Activated T-helper 1 cell treated with anti-CD3 and anti-CD28 coated beads, Interleukin-12 subunit alpha, Interleukin-12 subunit beta, Interleukin-2, Interleukin-4 antibody, amounts not matched to agents 30 ng/mL and 10 ng/mL and 1 ng/mL, durations not matched to agents 14 hours and 24 hours and 36 hours (primary cell): ENCODE measurements at regions of chr4 and their contacts with region 1.

Region 1: GRCh38 chr4:122151982-122152710 is at the start of gene BLTP1:
- DNase-seq: peak; percentile 89
- H3K4me3 Mint-ChIP-seq: peak within 1 kb of the TSS; percentile 97
- H3K27ac Mint-ChIP-seq: peak within 1 kb of the TSS; percentile 98
- H3K4me1 Mint-ChIP-seq: peaks cover 61% of the 10 kb centered on the region
- H3K27me3 Mint-ChIP-seq: no peaks in the 10 kb centered on the region
- total RNA-seq, gene BLTP1: 25.4 and 30.8 TPM in 2 replicates

Region 2: GRCh38 chr4:121696581-121697461 is 455.3 kb before region 1 on chr4 and contains the start of gene ANXA5:
- intact Hi-C with region 1: loop called (anchors 5 kb)
- DNase-seq: peak; percentile 78
- H3K4me3 Mint-ChIP-seq: peak within 1 kb of the TSS; percentile 99
- H3K27ac Mint-ChIP-seq: peak within 1 kb of the TSS; percentile 100
- H3K4me1 Mint-ChIP-seq: peaks cover 62% of the 10 kb centered on the region
- H3K27me3 Mint-ChIP-seq: peaks cover 40% of the 10 kb centered on the region
- total RNA-seq, gene ANXA5: 128 and 131 TPM in 2 replicates

Region 3: GRCh38 chr4:121711263-121712000 is 440.7 kb before region 1 on chr4:
- intact Hi-C with region 1: no loop called
- DNase-seq: peak; percentile 10
- H3K4me3 Mint-ChIP-seq: peak overlapping the region; percentile 45
- H3K27ac Mint-ChIP-seq: no peak overlapping the region
- H3K4me1 Mint-ChIP-seq: peaks cover 51% of the 10 kb centered on the region
- H3K27me3 Mint-ChIP-seq: peaks cover 24% of the 10 kb centered on the region

Region 4: DNA sequence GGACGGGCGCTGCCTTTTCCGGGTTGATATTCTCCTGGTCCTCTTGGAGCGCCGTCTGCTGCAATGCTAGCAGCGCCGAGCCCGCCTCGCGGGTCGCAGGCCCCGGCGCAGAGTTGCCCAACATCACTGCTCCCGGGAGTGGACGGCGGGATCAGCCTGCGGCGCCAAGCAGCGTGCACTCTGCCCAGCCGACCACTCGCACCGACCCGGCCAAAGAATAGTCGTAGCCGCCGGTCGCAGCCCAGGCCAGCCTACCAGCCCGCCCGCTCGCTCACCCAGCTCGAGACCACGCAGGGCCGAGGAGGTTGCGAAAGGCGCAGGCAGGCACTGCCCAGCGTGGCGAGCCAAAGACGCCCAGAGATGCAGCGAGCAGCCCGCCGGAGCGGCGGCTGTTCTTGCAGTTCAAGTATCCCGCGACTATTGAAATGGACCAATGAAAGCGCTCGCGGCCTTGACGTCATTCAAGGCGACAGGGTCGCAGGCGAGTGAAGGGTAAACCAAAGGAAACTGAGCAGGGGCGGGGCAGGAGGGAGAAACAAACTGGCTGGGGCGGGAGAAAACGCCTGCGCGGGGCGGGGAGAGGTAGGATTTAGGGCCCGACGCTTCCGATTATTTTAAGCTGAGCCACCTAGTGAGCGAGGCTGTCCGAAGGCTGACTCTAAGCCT is 328.5 kb before region 1 on chr4 and contains the start of gene CCNA2:
- intact Hi-C with region 1: loop called (anchors 1 kb)
- DNase-seq: peak; percentile 95
- H3K4me3 Mint-ChIP-seq: peak within 1 kb of the TSS; percentile 94
- H3K27ac Mint-ChIP-seq: peak within 1 kb of the TSS; percentile 91
- H3K4me1 Mint-ChIP-seq: peaks cover 45% of the 10 kb centered on the region
- H3K27me3 Mint-ChIP-seq: no peaks in the 10 kb centered on the region
- total RNA-seq, gene CCNA2: 59.9 and 64.3 TPM in 2 replicates

Region 5: GRCh38 chr4:121950212-121950679 is 201.9 kb before region 1 on chr4:
- intact Hi-C with region 1: loop called (anchors 1 kb)
- DNase-seq: peak; percentile 74
- H3K4me3 Mint-ChIP-seq: peak overlapping the region; percentile 89
- H3K27ac Mint-ChIP-seq: peak overlapping the region; percentile 46
- H3K4me1 Mint-ChIP-seq: peaks cover 26% of the 10 kb centered on the region
- H3K27me3 Mint-ChIP-seq: peaks cover 50% of the 10 kb centered on the region

Region 6: DNA sequence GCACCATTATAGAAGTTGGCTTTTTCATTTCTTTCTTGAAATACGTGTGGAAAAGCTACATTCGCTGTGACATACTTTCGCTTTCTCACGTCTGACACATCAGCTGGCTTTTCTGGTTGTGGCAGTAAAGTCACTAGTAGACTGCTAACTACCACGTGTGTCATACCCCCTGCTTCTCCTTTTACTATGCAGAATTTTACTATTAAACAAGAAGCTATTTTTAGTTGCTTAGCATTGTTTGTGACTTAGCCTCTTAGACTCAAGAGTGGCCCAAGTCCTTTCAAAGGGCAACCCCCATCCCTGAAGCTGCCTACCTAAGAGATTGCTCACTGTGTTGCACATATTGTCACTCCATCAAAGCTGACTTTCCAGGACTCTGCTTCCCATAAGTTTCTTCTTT is 306.5 kb after region 1 on chr4:
- intact Hi-C with region 1: loop called (anchors 5 kb)
- DNase-seq: peak; percentile 29
- H3K4me3 Mint-ChIP-seq: peak overlapping the region; percentile 76
- H3K27ac Mint-ChIP-seq: peak overlapping the region; percentile 87
- H3K4me1 Mint-ChIP-seq: peaks cover 46% of the 10 kb centered on the region
- H3K27me3 Mint-ChIP-seq: no peaks in the 10 kb centered on the region

Region 7: DNA sequence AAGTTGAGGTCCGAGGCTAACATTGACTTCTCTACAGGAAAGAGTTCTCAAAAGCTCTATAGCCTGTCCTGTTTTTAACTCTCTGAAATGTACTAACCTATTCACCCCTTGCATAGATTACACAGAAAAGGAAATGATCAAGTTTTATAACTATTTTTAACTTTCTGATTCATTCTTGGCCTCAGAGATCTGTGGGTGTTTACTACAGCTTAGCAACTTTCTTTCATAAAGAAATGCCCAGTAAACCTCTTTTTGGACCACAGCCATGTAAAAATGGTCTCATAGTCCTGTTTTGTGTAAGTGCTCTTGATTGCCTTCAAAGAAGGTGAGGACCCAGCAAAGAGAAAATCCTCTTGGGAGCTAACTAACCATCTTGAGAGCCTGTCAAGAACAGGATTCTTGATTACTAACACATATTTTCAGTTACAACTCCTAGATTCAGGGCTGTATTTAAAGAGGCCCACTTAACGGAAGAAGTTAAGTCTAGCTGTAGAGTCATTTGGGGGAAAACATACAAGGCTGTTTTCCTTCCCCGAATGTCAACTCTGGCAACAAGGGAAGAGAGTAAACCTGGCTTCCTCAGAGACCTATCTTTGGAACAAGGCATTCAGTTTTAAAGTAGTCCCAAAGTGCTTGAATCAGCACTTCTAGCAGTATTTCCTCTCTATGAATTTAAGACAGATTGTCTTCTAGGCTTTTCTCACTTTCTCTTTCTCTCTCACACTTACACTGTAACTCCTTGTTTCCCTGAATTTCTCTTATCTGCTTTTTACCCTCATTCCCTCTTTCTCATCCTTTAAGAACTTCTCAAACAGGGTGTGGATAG is 390.5 kb after region 1 on chr4:
- intact Hi-C with region 1: loop called (anchors 1 kb)
- DNase-seq: no peak
- H3K4me3 Mint-ChIP-seq: peak overlapping the region; percentile 71
- H3K27ac Mint-ChIP-seq: peak overlapping the region; percentile 93
- H3K4me1 Mint-ChIP-seq: peaks cover 85% of the 10 kb centered on the region
- H3K27me3 Mint-ChIP-seq: no peaks in the 10 kb centered on the region

Region 8: DNA sequence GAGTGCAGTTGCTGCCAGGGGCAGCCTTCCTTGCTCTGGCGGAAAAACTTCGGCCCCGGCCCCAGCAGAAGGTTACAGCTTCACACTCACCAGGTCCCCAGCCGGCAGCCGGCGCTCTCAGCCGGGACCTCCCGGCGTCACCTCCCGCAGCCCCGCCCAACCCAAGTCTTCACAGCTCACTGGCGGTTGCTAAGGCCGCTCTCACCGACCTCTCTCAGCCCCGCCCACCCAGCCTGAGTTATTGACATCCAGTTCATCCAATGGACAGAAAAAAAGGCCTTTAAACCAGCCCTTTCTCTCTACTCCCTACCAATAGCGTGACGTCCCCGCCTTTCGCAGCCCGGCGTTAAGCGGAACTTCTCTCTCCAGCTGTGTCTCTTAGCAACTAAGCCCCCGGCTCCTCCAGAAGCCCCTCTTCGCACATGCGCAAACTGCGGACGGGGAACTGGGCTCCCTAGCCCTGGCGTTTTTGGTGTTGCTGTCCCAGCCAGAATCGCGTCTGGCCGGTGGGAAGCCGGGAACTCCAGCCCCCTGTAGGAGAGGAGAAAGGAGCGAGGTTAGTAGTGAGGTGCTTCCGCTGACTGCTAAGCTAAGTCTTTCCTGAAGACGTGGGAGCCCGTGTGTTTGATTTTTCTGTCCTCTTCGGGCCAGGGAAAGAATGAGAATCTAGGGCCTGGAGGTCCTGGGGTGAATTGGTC is 580.3 kb after region 1 on chr4 and contains the start of gene BBS12:
- intact Hi-C with region 1: loop called (anchors 1 kb)
- DNase-seq: peak; percentile 98
- H3K4me3 Mint-ChIP-seq: peak within 1 kb of the TSS; percentile 94
- H3K27ac Mint-ChIP-seq: peak within 1 kb of the TSS; percentile 95
- H3K4me1 Mint-ChIP-seq: peaks cover 37% of the 10 kb centered on the region
- H3K27me3 Mint-ChIP-seq: no peaks in the 10 kb centered on the region
- total RNA-seq, gene BBS12: 4.4 and 6.2 TPM in 2 replicates